ENCODE measurements at regions of chr2 and their contacts with region 1.

Region 1: GRCh38 chr2:197399887-197400540 is 34.8 kb downstream of the SF3B1 start:
- DNase-seq: no peak
- ATAC-seq: no peak

Region 2: GRCh38 chr2:196783431-196784094 is 616.5 kb before region 1 on chr2:
- intact Hi-C with region 1: loop called in 1 of 2 experiments (anchors 10 kb)
- DNase-seq: no peak
- ATAC-seq: peak in 1 of 2 donors; percentile 72

Region 3: DNA sequence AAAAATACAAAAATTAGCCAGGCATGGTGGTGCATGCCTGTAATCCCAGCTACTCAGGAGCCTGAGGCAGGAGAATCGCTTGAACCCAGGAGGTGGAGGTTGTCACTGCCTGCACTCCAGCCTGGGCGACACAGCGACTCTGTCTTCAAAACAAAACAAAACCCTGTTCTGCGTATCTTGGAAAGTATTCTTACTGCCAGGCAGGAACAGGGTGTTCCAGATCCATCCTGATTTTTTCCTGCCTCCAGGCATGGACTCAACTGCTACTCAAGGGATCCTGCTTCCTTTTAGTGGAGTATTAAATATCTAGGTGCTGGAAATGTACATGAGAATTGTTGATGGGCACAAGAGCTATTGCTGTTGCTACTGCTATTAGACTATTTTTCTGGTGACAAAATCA is 87.4 kb after region 1 on chr2:
- intact Hi-C with region 1: loop called in 1 of 2 experiments (anchors 5 kb)
- DNase-seq: no peak
- ATAC-seq: no peak

Region 4: GRCh38 chr2:197556456-197556855 is 156.4 kb after region 1 on chr2:
- intact Hi-C with region 1: no loop called
- DNase-seq: no peak
- ATAC-seq: peak in 1 of 2 donors; percentile 70

Region 5: GRCh38 chr2:198106621-198107385 is 706.8 kb after region 1 on chr2:
- intact Hi-C with region 1: no loop called
- DNase-seq: no peak
- ATAC-seq: peak in 1 of 2 donors; percentile 57